ENCODE measurements at regions of chr20 and their contacts with region 1.

Region 1: DNA sequence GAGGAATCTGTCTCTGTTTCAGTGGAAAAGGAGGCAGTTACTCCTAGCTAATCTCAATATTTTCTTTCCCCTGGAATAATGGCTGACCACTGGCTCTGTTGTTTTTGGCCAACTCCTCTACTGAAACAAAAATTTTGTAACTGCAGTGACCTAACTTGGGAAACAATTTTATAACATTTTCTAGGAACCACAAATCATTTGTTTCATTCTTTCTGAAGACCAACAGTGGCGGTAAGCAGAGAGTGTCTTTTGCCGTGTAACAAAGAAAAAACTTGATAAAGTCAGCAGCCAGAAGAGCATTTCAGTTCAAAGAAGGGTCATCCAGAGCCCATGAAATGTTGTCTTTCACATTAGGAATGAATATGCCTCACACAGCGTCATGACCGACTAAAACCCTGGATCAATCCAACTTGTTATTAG is 11.8 kb upstream of the BFSP1 start:
- DNase-seq: no peak
- H3K4me3 ChIP-seq: no peak overlapping the region
- H3K27ac ChIP-seq: peak overlapping the region; percentile 72 to 73
- H3K4me1 ChIP-seq: peaks cover 0 to 88% (median 40%) of the 10 kb centered on the region in 4 donors
- H3K27me3 ChIP-seq: no peaks in the 10 kb centered on the region
- CTCF ChIP-seq: no peak

Region 2: GRCh38 chr20:17569616-17570346 is 26.8 kb after region 1 on chr20 and contains the start of gene DSTN:
- intact Hi-C with region 1: loop called (anchors 2 kb)
- DNase-seq: peak; percentile 90 to 97
- H3K4me3 ChIP-seq: peak within 1 kb of the TSS; percentile 85 to 93
- H3K27ac ChIP-seq: peak within 1 kb of the TSS; percentile 99 to 100
- H3K4me1 ChIP-seq: peaks cover 0 to 49% (median 27%) of the 10 kb centered on the region in 4 donors
- H3K27me3 ChIP-seq: no peaks in the 10 kb centered on the region
- CTCF ChIP-seq: no peak

Region 3: DNA sequence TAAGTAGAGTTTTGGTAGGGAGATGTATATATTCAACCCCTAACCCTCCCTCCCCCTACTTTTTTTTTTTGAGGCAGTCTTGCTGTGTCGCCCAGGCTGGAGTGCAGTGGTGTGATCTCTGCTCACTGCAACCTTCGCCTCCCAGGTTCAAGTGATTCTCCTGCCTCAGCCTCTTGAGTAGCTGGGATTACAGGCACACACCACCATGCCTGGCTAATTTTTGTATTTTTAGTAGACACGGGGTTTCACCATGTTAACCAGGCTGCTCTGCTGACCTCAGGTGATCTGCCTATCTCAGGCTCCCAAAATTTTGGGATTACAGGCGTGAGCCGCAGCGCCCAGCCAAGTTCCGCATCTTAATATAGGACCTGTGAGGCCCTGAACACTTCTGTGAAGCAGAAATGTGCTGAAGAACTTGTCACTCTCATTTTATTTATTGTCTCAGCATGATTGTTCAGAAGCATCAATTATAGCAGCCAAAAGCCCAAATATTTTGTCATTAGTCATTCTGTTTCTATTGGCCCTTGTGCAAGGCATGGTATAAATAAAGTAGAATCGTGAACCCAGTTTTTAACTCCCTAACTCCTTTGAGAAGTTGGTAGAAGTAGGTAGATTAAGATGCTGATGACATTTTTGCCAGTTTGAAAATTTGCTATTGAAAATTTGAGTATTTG is 46.3 kb after region 1 on chr20:
- intact Hi-C with region 1: no loop called
- DNase-seq: peak in 1 of 2 donors; percentile 75
- H3K4me3 ChIP-seq: peak overlapping the region; percentile 35 to 37
- H3K27ac ChIP-seq: peak overlapping the region; percentile 83 to 99
- H3K4me1 ChIP-seq: peaks cover 0 to 98% (median 81%) of the 10 kb centered on the region in 4 donors
- H3K27me3 ChIP-seq: no peaks in the 10 kb centered on the region
- CTCF ChIP-seq: no peak